Sciatic nerve (tissue), 2 donors: ENCODE measurements at regions of chr19 and their contacts with region 1.

Region 1: GRCh38 chr19:33521480-33522370 is at the start of gene PEPD:
- DNase-seq: peak; percentile 95
- ATAC-seq: peak; percentile 99
- total RNA-seq, gene PEPD: 62.8 TPM

Region 2: GRCh38 chr19:33406521-33407139 is 115.1 kb before region 1 on chr19:
- intact Hi-C with region 1: no loop called
- DNase-seq: peak; percentile 90
- ATAC-seq: peak; percentile 79

Region 3: GRCh38 chr19:33582914-33583313 is 61.2 kb after region 1 on chr19:
- intact Hi-C with region 1: loop called (anchors 1 kb)
- DNase-seq: no peak
- ATAC-seq: no peak